B cell (primary cell): ENCODE measurements at regions of chr20 and their contacts with region 1.

Region 1: GRCh38 chr20:53660078-53660909 is 66.7 kb upstream of the ZNF217 start:
- DNase-seq: peak; percentile 52
- ATAC-seq: peak; percentile 46
- H3K4me3 ChIP-seq: peak overlapping the region; percentile 46 to 77 (median 70)
- H3K4me3 Mint-ChIP-seq: peak overlapping the region; percentile 95
- H3K27ac ChIP-seq: peak overlapping the region; percentile 61 to 78
- H3K27ac Mint-ChIP-seq: peak overlapping the region; percentile 92
- H3K4me1 ChIP-seq: peaks cover 44 to 48% of the 10 kb centered on the region in 2 donors
- H3K4me1 Mint-ChIP-seq: peaks cover 59% of the 10 kb centered on the region
- H3K27me3 ChIP-seq: no peaks in the 10 kb centered on the region
- H3K27me3 Mint-ChIP-seq: no peaks in the 10 kb centered on the region
- CTCF ChIP-seq: no peak

Region 2: DNA sequence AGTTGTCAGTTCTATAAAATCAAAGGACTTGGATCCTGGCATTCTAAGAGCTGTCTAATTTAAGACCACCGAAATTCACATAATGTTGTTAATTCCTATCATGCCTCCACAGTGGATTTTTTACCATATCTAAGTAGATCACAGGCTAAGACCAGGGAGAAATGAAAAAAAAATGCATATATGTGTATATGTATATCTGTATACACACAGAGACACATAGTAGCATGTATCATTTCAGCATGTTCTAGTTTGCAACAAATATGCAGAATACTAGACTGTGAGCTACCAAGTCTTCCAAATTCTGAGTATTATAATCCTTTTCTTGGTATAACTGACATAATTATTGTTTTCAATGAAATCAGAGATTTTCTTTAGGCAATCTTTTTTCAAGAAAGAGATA is 955.7 kb before region 1 on chr20:
- CTCF ChIA-PET with region 1: no interaction called
- POLR2A ChIA-PET with region 1: no interaction called
- intact Hi-C with region 1: no loop called
- DNase-seq: no peak
- ATAC-seq: no peak
- H3K4me3 ChIP-seq: no peak overlapping the region
- H3K4me3 Mint-ChIP-seq: no peak overlapping the region
- H3K27ac ChIP-seq: no peak overlapping the region
- H3K27ac Mint-ChIP-seq: no peak overlapping the region
- H3K4me1 ChIP-seq: no peaks in the 10 kb centered on the region
- H3K4me1 Mint-ChIP-seq: no peaks in the 10 kb centered on the region
- H3K27me3 ChIP-seq: no peaks in the 10 kb centered on the region
- H3K27me3 Mint-ChIP-seq: no peaks in the 10 kb centered on the region
- CTCF ChIP-seq: no peak

Region 3: GRCh38 chr20:53539516-53539915 is 120.8 kb before region 1 on chr20:
- CTCF ChIA-PET with region 1: no interaction called
- POLR2A ChIA-PET with region 1: no interaction called
- intact Hi-C with region 1: no loop called
- DNase-seq: no peak
- ATAC-seq: no peak
- H3K4me3 ChIP-seq: no peak overlapping the region
- H3K4me3 Mint-ChIP-seq: no peak overlapping the region
- H3K27ac ChIP-seq: no peak overlapping the region
- H3K27ac Mint-ChIP-seq: no peak overlapping the region
- H3K4me1 ChIP-seq: no peaks in the 10 kb centered on the region
- H3K4me1 Mint-ChIP-seq: no peaks in the 10 kb centered on the region
- H3K27me3 ChIP-seq: no peaks in the 10 kb centered on the region
- H3K27me3 Mint-ChIP-seq: no peaks in the 10 kb centered on the region
- CTCF ChIP-seq: no peak

Region 4: GRCh38 chr20:53623454-53624211 is 36.7 kb before region 1 on chr20:
- CTCF ChIA-PET with region 1: interaction called, 3 read pairs
- POLR2A ChIA-PET with region 1: interaction called, 3 read pairs
- intact Hi-C with region 1: loop called (anchors 5 kb)
- DNase-seq: peak; percentile 52
- ATAC-seq: peak; percentile 66
- H3K4me3 ChIP-seq: peak overlapping the region; percentile 32 to 58 (median 47)
- H3K4me3 Mint-ChIP-seq: peak overlapping the region; percentile 91
- H3K27ac ChIP-seq: peak overlapping the region; percentile 50 to 77
- H3K27ac Mint-ChIP-seq: peak overlapping the region; percentile 94
- H3K4me1 ChIP-seq: peaks cover 40 to 53% of the 10 kb centered on the region in 2 donors
- H3K4me1 Mint-ChIP-seq: peaks cover 47% of the 10 kb centered on the region
- H3K27me3 ChIP-seq: no peaks in the 10 kb centered on the region
- H3K27me3 Mint-ChIP-seq: no peaks in the 10 kb centered on the region
- CTCF ChIP-seq: no peak

Region 5: DNA sequence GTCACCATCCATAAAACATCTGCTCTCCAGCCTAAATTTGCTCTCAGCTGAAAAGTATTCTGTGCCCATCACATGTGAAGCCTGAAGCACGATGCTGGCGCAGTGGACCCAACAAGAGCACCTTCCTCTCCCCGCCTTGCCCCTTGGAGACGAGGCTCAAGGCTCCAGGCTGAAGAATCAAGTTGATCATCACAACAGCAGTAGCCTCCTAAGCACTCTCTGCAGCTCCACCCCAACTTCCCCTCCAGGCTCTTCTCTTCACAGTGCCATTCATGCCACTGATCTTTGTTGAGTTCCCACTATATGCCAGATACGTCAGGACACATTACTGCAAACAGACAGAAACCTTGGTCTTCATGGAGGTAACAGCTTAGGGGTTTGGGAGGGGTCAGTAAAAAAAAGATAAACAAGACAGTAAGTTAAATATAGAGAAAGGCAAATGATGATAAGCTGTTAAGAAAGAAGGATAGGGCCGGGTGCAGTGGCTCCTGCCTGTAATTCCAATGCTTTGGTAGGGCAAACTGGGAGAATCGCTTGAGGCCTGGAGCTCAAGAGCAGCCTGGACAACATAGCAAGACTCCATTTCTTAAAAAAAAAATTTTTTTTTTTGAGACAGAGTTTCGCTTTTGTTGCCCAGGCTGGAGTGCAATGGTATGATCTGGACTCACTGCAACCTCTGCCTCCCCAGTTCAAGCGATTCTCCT is 24.9 kb before region 1 on chr20:
- CTCF ChIA-PET with region 1: interaction called, 3 read pairs
- POLR2A ChIA-PET with region 1: interaction called, 10 read pairs
- intact Hi-C with region 1: no loop called
- DNase-seq: no peak
- ATAC-seq: no peak
- H3K4me3 ChIP-seq: no peak overlapping the region
- H3K4me3 Mint-ChIP-seq: peak overlapping the region; percentile 49
- H3K27ac ChIP-seq: peak overlapping the region; percentile 7 to 83
- H3K27ac Mint-ChIP-seq: peak overlapping the region; percentile 79
- H3K4me1 ChIP-seq: peaks cover 33 to 34% of the 10 kb centered on the region in 2 donors
- H3K4me1 Mint-ChIP-seq: peaks cover 36% of the 10 kb centered on the region
- H3K27me3 ChIP-seq: no peaks in the 10 kb centered on the region
- H3K27me3 Mint-ChIP-seq: no peaks in the 10 kb centered on the region
- CTCF ChIP-seq: no peak

Region 6: DNA sequence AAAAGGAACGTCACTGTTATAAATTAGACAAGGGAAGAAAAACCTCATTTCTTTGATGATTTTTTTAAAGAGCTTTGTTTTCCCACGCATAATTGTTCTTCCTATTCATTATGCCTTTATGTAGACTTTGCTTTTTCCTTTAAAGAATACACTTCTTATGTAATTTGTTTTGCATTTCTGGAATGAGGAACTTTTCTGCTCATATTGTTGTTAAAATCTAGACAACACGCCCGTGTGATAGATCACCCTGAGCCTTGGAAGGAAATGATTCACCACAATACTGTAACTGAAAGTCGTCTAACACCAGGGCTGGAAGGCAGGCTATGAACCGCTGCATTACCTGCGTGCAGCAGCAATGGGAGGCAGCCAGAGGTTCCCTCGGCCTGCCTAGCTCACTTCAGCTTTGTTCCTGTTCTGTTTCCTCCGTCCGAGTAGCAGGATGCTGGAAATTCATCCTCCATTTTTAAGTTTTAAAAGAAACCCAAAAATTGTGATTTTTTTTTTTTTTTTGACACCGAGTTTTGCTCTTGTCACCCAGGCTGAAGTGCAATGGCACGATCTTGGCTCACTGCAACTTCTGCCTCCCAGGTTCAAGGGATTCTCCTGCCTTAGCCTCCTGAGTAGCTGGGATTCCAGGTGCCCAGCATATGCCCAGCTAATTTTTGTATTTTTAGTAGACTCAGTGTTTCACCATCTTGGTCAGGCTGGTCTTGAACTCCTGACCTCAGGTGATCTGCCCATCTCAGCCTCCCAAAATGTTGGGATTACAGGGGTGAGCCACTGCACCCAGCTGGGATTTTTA is 17.1 kb before region 1 on chr20:
- CTCF ChIA-PET with region 1: interaction called, 10 read pairs
- POLR2A ChIA-PET with region 1: interaction called, 6 read pairs
- intact Hi-C with region 1: loop called (anchors 1 kb)
- DNase-seq: peak; percentile 74
- ATAC-seq: peak; percentile 90
- H3K4me3 ChIP-seq: peak overlapping the region in 4 of 5 experiments; percentile 0 to 43 (median 24)
- H3K4me3 Mint-ChIP-seq: peak overlapping the region; percentile 82
- H3K27ac ChIP-seq: peak overlapping the region; percentile 64 to 85
- H3K27ac Mint-ChIP-seq: peak overlapping the region; percentile 95
- H3K4me1 ChIP-seq: peaks cover 23 to 26% of the 10 kb centered on the region in 2 donors
- H3K4me1 Mint-ChIP-seq: peaks cover 31% of the 10 kb centered on the region
- H3K27me3 ChIP-seq: no peaks in the 10 kb centered on the region
- H3K27me3 Mint-ChIP-seq: no peaks in the 10 kb centered on the region
- CTCF ChIP-seq: no peak

Region 7: GRCh38 chr20:53708129-53708968 is 48.1 kb after region 1 on chr20:
- CTCF ChIA-PET with region 1: interaction called, 3 read pairs
- POLR2A ChIA-PET with region 1: interaction called, 3 read pairs
- intact Hi-C with region 1: loop called (anchors 5 kb)
- DNase-seq: peak; percentile 46
- ATAC-seq: peak; percentile 35
- H3K4me3 ChIP-seq: peak overlapping the region in 2 of 5 experiments; percentile 28 to 38
- H3K4me3 Mint-ChIP-seq: peak overlapping the region; percentile 72
- H3K27ac ChIP-seq: peak overlapping the region; percentile 77 to 79
- H3K27ac Mint-ChIP-seq: peak overlapping the region; percentile 88
- H3K4me1 ChIP-seq: peaks cover 42 to 58% of the 10 kb centered on the region in 2 donors
- H3K4me1 Mint-ChIP-seq: peaks cover 43% of the 10 kb centered on the region
- H3K27me3 ChIP-seq: no peaks in the 10 kb centered on the region
- H3K27me3 Mint-ChIP-seq: no peaks in the 10 kb centered on the region
- CTCF ChIP-seq: no peak

Region 8: GRCh38 chr20:53738039-53738944 is 78.0 kb after region 1 on chr20:
- CTCF ChIA-PET with region 1: interaction called, 8 read pairs
- POLR2A ChIA-PET with region 1: interaction called, 4 read pairs
- intact Hi-C with region 1: loop called (anchors 5 kb)
- DNase-seq: peak; percentile 41
- ATAC-seq: no peak
- H3K4me3 ChIP-seq: no peak overlapping the region
- H3K4me3 Mint-ChIP-seq: peak overlapping the region; percentile 10
- H3K27ac ChIP-seq: peak overlapping the region; percentile 77 to 79
- H3K27ac Mint-ChIP-seq: peak overlapping the region; percentile 83
- H3K4me1 ChIP-seq: peaks cover 64 to 65% of the 10 kb centered on the region in 2 donors
- H3K4me1 Mint-ChIP-seq: peaks cover 71% of the 10 kb centered on the region
- H3K27me3 ChIP-seq: no peaks in the 10 kb centered on the region
- H3K27me3 Mint-ChIP-seq: no peaks in the 10 kb centered on the region
- CTCF ChIP-seq: no peak